H1 (cell line): ENCODE measurements at regions of chr3 and their contacts with region 1.

Region 1: GRCh38 chr3:185942907-185943759 is 5.3 kb upstream of the TRA2B start:
- DNase-seq: peak; percentile 84 to 93
- H3K4me3 ChIP-seq: no peak overlapping the region
- H3K27ac ChIP-seq: no peak overlapping the region
- H3K4me1 ChIP-seq: peaks cover 0 to 2% (median 0%) of the 10 kb centered on the region in 4 experiments; a peak in 1 of 7 replicates
- H3K27me3 ChIP-seq: no peaks in the 10 kb centered on the region
- CTCF ChIP-seq: peak; percentile 82 to 100 (median 92)
- EP300 ChIP-seq: peak in 1 of 2 experiments; percentile 21; a peak in 1 of 3 replicates
- POLR2A ChIP-seq: no peak
- RAD21 ChIP-seq: peak; percentile 61 to 74

Region 2: DNA sequence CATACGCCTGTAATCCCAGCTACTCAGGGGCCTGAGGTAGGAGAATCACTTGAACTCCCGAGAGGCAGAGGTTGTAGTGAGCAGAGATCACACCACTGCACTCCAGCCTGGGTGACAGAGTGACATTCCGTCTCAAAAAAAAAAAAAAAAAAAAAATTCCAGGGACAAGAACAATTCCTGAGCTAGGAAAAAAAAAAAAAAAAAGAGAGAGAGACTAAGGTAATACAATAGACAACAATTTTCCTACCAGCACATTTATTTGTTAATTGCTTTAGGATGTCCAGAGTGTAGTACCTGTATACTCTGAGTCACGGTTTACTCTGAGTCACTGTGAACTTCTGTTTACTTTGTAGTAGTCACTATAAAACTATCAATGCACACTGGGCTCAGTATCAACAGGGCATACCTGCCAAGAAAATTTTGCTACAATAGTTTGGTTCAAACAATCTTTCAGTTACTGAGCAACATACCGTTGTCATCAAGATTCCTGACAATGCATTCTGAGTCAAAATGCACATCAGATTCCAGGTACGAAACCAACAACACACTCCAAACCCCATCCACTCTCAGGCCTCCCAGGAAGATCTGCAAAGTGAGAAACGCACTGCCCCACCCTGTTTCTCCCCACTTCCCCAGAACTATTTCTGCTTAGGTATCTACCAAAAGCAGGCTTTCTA is 146.6 kb before region 1 on chr3:
- CTCF ChIA-PET with region 1: no interaction called
- POLR2A ChIA-PET with region 1: no interaction called
- DNase-seq: no peak
- H3K4me3 ChIP-seq: no peak overlapping the region
- H3K27ac ChIP-seq: 0 out of 2 replicates have a peak overlapping the region, but pooled peaks have one; percentile 8
- H3K4me1 ChIP-seq: peaks cover 0 to 19% (median 16%) of the 10 kb centered on the region in 4 experiments; a peak in 5 of 7 replicates
- H3K27me3 ChIP-seq: no peaks in the 10 kb centered on the region
- CTCF ChIP-seq: no peak
- EP300 ChIP-seq: no peak
- POLR2A ChIP-seq: no peak
- RAD21 ChIP-seq: no peak

Region 3: DNA sequence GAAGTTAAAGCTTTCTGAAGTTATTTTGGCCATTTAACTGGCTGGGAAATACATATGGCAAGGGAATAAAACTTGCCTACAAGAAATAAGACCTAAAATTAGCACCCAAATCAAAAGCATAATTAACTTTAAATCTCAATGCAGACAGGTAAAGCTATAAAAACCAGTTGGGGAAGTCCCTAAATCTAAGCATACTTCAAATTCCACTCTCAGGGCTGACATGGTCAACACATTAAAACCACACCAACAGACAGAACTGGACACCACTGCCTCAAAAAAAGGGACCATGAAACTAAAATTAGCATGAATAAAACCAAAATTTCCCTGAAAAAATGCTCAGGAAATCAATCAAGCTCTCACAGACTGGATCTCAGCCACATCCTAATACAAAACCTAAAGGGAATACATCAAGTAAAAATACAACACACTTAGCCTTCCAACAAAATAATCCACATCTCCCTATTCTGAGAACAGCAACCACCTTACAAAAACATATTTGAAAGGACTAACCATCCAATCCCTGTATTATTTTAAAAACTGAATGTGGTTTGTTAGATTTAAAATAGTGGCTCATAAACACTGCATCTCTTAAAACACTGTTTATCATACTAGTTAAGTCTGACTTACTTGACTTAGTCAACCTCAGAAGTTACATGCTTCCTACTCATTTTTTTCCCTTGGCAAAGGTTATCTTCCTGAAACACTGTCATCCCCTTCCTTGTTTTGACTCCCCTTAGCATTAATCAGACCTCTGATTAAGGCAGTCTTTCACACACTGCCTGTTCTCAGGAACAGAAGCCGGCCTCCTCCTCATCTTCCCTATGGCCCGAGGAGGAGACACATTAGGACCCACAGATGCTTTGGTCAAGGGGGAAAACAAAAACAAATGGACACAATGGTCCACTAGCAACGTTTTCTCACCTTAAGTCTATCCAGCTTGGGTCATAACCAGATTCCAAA is 13.7 kb before region 1 on chr3:
- CTCF ChIA-PET with region 1: interaction called, 12 read pairs
- POLR2A ChIA-PET with region 1: interaction called, 171 read pairs
- DNase-seq: no peak
- H3K4me3 ChIP-seq: peak overlapping the region in 3 of 4 experiments; percentile 1 to 92 (median 11); a peak in 4 of 8 replicates
- H3K27ac ChIP-seq: no peak overlapping the region
- H3K4me1 ChIP-seq: peaks cover 0 to 20% (median 12%) of the 10 kb centered on the region in 4 experiments; a peak in 5 of 7 replicates
- H3K27me3 ChIP-seq: no peaks in the 10 kb centered on the region
- CTCF ChIP-seq: no peak
- EP300 ChIP-seq: no peak
- POLR2A ChIP-seq: peak; percentile 16 to 22
- RAD21 ChIP-seq: no peak

Region 4: DNA sequence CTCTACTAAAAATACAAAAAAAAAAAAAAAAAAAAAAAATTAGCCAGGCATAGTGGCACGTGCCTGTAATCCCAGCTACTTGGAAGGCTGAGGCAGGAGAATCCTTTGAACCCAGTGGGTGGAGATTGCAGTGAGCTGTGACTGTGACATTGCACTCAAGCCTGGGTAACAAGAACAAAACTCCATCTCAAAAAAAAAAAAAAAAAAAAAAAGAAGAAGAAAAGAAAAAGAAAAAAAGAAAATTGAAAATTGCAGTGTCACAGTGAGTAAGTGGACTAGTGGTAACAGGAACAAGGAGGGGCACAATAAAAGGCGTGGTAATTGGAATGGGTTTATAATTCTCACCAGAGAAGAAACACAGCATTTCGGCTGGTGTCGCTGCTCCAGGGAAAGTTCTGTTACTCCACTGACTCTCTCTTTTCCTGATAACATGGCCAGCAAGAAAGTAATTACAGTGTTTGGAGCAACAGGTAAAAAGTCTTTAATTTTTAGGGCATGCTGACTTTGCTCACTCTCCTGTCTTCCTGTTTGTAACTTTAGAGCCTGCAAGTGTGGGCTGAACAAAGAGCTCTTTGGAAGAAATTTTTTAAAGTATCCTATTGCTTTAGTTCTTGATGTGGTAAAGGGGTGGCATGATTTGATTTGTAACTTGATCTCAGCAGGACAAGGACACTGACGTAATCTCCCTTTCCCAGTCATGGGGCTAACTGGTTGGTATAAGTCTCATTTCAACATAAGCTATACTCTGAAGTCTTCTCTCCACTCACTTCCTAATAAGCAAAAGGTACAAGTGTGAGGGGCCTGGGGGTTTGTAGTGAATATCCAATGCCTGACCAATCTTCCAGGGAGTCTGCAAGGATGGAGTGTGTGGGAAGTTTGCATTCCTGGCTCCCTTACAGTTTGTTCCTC is 16.7 kb after region 1 on chr3:
- CTCF ChIA-PET with region 1: interaction called, 62 read pairs
- POLR2A ChIA-PET with region 1: interaction called, 18 read pairs
- DNase-seq: no peak
- H3K4me3 ChIP-seq: no peak overlapping the region
- H3K27ac ChIP-seq: no peak overlapping the region
- H3K4me1 ChIP-seq: peaks cover 0 to 4% (median 0%) of the 10 kb centered on the region in 4 experiments; a peak in 1 of 7 replicates
- H3K27me3 ChIP-seq: no peaks in the 10 kb centered on the region
- CTCF ChIP-seq: no peak
- EP300 ChIP-seq: no peak
- POLR2A ChIP-seq: no peak
- RAD21 ChIP-seq: no peak

Region 5: GRCh38 chr3:185968168-185968567 is 25.0 kb after region 1 on chr3:
- CTCF ChIA-PET with region 1: interaction called, 23 read pairs
- POLR2A ChIA-PET with region 1: interaction called, 5 read pairs
- DNase-seq: no peak
- H3K4me3 ChIP-seq: no peak overlapping the region
- H3K27ac ChIP-seq: no peak overlapping the region
- H3K4me1 ChIP-seq: no peaks in the 10 kb centered on the region
- H3K27me3 ChIP-seq: no peaks in the 10 kb centered on the region
- CTCF ChIP-seq: peak in 2 of 3 experiments; percentile 22 to 27; a peak in 2 of 4 replicates
- EP300 ChIP-seq: no peak
- POLR2A ChIP-seq: no peak
- RAD21 ChIP-seq: peak; percentile 7 to 22; a peak in 1 of 4 replicates

Region 6: GRCh38 chr3:185976977-185977678 is 34.0 kb after region 1 on chr3:
- CTCF ChIA-PET with region 1: interaction called, 18 read pairs
- POLR2A ChIA-PET with region 1: no interaction called
- DNase-seq: peak; percentile 41 to 93
- H3K4me3 ChIP-seq: no peak overlapping the region
- H3K27ac ChIP-seq: no peak overlapping the region
- H3K4me1 ChIP-seq: no peaks in the 10 kb centered on the region
- H3K27me3 ChIP-seq: no peaks in the 10 kb centered on the region
- CTCF ChIP-seq: peak; percentile 90 to 99 (median 97)
- EP300 ChIP-seq: no peak
- POLR2A ChIP-seq: no peak
- RAD21 ChIP-seq: peak; percentile 79 to 82

Region 7: DNA sequence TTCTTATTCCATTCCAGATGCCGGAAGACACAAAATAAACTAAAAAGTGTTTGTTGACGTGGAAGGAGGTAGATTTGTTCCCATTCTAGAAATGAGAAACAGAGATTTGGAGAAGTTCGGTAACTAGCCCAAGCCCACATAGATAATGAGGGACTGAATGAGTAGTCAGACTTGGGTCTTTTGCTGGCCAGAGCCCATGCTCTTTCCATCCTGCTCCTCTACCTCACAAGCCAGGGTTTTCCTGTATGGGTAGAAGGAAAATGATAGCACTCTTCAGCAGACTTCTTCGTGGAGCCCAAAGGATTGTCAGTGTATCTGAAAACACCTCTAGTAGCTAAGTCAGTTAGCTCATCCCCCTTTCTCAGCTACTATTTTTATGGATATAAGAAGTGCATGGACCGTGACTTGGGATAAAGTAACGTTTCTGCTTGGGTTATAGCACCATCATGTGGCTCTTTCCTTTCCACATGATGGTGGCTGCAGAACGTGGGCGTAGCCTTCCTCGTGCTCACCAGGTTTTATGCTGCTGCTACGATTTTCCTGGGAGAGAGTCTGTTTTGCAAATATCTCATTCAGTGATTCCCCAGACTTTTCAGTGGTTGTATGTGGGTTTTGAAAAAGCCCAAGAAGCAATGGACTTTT is 334.3 kb after region 1 on chr3:
- CTCF ChIA-PET with region 1: interaction called, 12 read pairs
- POLR2A ChIA-PET with region 1: interaction called, 3 read pairs
- DNase-seq: no peak
- H3K4me3 ChIP-seq: no peak overlapping the region
- H3K27ac ChIP-seq: no peak overlapping the region
- H3K4me1 ChIP-seq: no peaks in the 10 kb centered on the region
- H3K27me3 ChIP-seq: no peaks in the 10 kb centered on the region
- CTCF ChIP-seq: peak; percentile 53 to 72 (median 67)
- EP300 ChIP-seq: no peak
- POLR2A ChIP-seq: no peak
- RAD21 ChIP-seq: peak; percentile 86 to 92